Body of pancreas (tissue), 4 donors: ENCODE measurements at regions of chr19 and their contacts with region 1.

Region 1: GRCh38 chr19:13872695-13873389 is 4.1 kb upstream of the NANOS3 start:
- DNase-seq: peak in 3 of 4 donors; percentile 28 to 46 (median 36)
- ATAC-seq: peak; percentile 28
- H3K4me3 ChIP-seq: no peak overlapping the region
- H3K27ac ChIP-seq: no peak overlapping the region
- H3K4me1 ChIP-seq: peaks cover 12% of the 10 kb centered on the region
- H3K27me3 ChIP-seq: no peaks in the 10 kb centered on the region
- CTCF ChIP-seq: peak in 4 of 7 experiments; percentile 10 to 17 (median 10)
- POLR2A ChIP-seq: no peak

Region 2: DNA sequence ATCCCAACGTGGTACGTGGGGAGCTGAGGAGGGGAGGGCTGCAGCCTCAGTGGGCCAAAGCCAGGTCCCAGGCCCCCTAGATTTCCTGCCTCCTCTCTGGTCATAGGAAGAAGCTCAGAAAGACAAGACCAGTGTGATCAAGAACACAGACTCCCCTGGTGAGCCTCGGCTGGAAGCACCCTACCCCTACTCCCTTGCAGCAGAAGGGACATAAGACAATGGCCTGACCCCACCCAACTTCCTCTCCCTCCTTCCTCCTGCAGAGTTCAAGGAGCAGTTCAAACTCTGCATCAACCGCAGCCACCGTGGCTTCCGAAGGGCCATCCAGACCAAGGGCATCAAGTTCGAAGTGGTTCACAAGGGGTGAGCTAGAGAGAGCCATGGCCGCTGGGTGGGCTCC is 53.9 kb after region 1 on chr19:
- intact Hi-C with region 1: no loop called
- DNase-seq: no peak
- ATAC-seq: no peak
- H3K4me3 ChIP-seq: no peak overlapping the region
- H3K27ac ChIP-seq: no peak overlapping the region
- H3K4me1 ChIP-seq: no peaks in the 10 kb centered on the region
- H3K27me3 ChIP-seq: no peaks in the 10 kb centered on the region
- CTCF ChIP-seq: no peak
- POLR2A ChIP-seq: no peak

Region 3: DNA sequence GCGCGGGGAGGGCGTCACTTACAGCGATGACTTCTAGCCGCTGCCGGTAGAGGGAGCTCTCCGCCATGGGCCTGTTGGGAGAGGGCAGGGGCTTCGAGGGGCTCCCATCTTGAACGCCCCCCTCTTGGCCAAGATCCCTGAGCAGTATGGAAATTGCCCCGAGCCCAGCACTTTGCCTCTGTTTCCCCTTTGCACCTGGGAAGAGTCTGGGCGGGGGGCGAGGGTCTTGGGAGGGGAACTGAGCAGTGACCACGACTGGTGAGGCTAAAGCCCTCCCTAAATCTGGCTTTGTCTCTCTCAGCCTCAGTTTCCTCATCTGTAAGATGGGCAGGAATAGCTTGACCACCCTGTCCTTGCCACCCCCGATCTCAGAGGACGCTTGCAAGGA is 186.2 kb after region 1 on chr19:
- intact Hi-C with region 1: loop called (anchors 10 kb)
- DNase-seq: no peak
- ATAC-seq: no peak
- H3K4me3 ChIP-seq: no peak overlapping the region
- H3K27ac ChIP-seq: no peak overlapping the region
- H3K4me1 ChIP-seq: peaks cover 48% of the 10 kb centered on the region
- H3K27me3 ChIP-seq: no peaks in the 10 kb centered on the region
- CTCF ChIP-seq: peak; percentile 18 to 54 (median 33)
- POLR2A ChIP-seq: no peak